HepG2 (cell line): ENCODE measurements at regions of chr11 and their contacts with region 1.

Region 1: DNA sequence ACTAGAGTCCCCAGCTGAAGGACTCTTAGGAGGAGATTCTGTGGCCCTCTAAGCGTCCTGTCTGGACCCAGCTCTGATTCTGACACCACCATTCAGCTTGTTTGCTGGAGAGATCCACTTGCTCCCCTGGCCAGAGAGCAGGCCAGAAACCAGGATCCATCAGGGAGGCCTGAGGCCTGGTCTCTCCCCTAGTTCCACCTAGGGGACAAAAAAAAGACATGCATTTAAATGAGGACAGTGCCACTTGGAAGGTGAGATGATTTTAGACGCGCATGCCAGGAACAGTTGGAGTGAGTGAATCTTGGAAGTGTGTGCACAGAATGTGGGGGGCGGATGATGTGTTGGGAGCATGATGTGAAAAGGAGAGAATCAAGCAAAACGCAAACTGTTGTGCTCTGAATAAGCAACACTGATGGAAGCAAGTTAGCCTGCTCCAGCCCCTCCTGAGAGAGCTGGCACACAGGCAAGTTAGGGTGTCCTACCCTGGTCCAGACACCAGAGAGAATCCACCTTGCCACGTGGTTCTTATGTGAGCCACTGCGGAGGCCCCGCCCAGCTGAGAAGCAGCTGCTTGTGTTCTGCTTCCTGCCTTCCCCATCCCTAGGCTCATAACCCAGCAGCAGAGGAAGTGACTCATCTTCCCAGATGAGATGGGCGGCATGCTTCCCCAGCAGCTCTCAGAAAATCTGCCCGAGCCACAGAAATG is 8.0 kb upstream of the SLCO2B1 start:
- DNase-seq: peak; percentile 72
- ATAC-seq: peak; percentile 52
- H3K4me3 ChIP-seq: no peak overlapping the region
- H3K27ac ChIP-seq: no peak overlapping the region
- H3K4me1 ChIP-seq: peaks cover 55% of the 10 kb centered on the region
- H3K27me3 ChIP-seq: peaks cover 1 to 6% of the 10 kb centered on the region in 2 experiments; a peak in 2 of 5 replicates
- CTCF ChIP-seq: no peak; the same call in 1 of the 2 replicates
- EP300 ChIP-seq: no peak
- POLR2A ChIP-seq: no peak
- RAD21 ChIP-seq: no peak

Region 2: DNA sequence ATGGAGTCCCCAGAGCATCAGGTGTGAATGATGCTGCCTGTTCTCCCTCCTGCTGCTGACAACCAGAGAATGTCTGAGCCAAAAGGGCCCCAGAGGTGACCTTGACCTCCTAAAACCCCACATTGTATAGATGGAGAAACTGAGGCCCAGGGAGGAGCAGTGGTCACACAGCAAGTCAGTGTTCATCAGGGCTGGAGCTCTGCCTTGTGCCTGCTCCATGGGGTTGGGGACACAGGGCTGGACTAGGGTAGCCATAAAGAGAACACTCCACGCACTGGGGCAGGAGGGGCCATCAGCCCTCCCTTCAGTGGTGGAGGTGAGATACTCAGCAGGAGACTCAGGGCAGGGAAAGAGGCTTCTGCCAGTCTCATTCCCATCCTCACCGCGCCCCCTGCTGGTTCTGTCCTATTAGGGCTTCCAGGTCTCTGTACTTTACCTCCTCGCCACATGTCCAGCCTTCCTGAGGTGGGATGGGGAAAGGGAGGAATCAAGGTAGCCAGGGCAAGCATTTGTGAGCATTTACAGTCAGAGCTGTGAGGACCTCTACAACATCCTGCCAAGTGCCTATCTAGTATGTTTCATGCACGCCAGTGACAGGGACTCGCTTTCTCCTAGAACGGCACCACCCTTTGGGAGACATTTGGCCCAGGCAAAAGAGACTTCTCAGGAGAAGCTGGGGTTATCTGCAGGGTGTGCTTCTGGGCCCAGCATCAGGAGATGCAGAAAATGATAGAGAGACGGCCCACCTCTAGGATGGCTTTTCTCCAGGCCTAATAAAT is 110.9 kb before region 1 on chr11:
- CTCF ChIA-PET with region 1: no interaction called
- POLR2A ChIA-PET with region 1: no interaction called
- in situ Hi-C with region 1: no loop called
- intact Hi-C with region 1: loop called (anchors 5 kb)
- DNase-seq: peak; percentile 65
- ATAC-seq: peak; percentile 95
- H3K4me3 ChIP-seq: no peak overlapping the region
- H3K27ac ChIP-seq: no peak overlapping the region
- H3K4me1 ChIP-seq: peaks cover 18% of the 10 kb centered on the region
- H3K27me3 ChIP-seq: peaks cover 0 to 2% of the 10 kb centered on the region in 2 experiments; a peak in 2 of 5 replicates
- CTCF ChIP-seq: peak; percentile 93
- EP300 ChIP-seq: no peak
- POLR2A ChIP-seq: no peak
- RAD21 ChIP-seq: peak; percentile 79

Region 3: DNA sequence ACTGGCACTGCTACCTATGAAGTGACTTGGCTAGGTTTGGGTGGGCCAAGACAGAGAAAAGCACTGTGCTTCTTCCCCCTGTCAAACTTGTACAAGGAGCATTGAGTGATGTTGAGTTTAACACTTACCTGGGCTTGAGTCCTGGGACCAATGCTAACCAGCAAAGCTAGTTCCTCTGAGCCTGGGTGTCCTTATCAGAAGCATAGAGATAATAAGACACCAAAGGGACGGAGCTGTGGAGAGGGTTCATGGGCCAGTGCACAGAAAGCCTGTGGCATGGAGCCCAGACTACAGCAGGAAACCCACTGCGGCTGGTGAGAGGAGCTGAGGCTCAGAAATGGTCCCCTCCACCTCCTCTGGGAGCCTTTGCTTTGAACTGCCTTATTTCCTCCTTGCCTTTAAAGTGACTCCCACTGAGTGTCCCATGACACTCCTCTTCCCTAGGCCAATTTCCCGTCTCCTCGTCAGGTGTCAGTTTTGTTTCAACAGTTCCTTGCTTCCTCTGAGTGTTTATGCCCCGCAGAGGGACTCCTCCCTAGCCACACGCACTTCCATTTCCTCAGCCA is 17.4 kb after region 1 on chr11:
- CTCF ChIA-PET with region 1: interaction called, 3 read pairs
- POLR2A ChIA-PET with region 1: interaction called, 28 read pairs
- in situ Hi-C with region 1: no loop called
- intact Hi-C with region 1: no loop called
- DNase-seq: no peak
- ATAC-seq: no peak
- H3K4me3 ChIP-seq: peak overlapping the region; percentile 9 to 61 (median 15); a peak in 4 of 6 replicates
- H3K27ac ChIP-seq: peak overlapping the region; percentile 89
- H3K4me1 ChIP-seq: peaks cover 100% of the 10 kb centered on the region
- H3K27me3 ChIP-seq: no peaks in the 10 kb centered on the region
- CTCF ChIP-seq: no peak
- EP300 ChIP-seq: no peak
- POLR2A ChIP-seq: no peak
- RAD21 ChIP-seq: no peak

Region 4: GRCh38 chr11:75241036-75241905 is 98.4 kb after region 1 on chr11:
- CTCF ChIA-PET with region 1: interaction called, 43 read pairs
- POLR2A ChIA-PET with region 1: interaction called, 6 read pairs
- in situ Hi-C with region 1: loop called (anchors 5 kb)
- intact Hi-C with region 1: loop called (anchors 2 kb)
- DNase-seq: peak; percentile 57
- ATAC-seq: peak; percentile 86
- H3K4me3 ChIP-seq: peak overlapping the region; percentile 46 to 74 (median 46); a peak in 5 of 6 replicates
- H3K27ac ChIP-seq: no peak overlapping the region
- H3K4me1 ChIP-seq: peaks cover 15% of the 10 kb centered on the region; the same call in 1 of the 2 replicates
- H3K27me3 ChIP-seq: peaks cover 15 to 63% of the 10 kb centered on the region in 2 experiments
- CTCF ChIP-seq: peak; percentile 76
- EP300 ChIP-seq: no peak
- POLR2A ChIP-seq: no peak
- RAD21 ChIP-seq: peak; percentile 97

Region 5: DNA sequence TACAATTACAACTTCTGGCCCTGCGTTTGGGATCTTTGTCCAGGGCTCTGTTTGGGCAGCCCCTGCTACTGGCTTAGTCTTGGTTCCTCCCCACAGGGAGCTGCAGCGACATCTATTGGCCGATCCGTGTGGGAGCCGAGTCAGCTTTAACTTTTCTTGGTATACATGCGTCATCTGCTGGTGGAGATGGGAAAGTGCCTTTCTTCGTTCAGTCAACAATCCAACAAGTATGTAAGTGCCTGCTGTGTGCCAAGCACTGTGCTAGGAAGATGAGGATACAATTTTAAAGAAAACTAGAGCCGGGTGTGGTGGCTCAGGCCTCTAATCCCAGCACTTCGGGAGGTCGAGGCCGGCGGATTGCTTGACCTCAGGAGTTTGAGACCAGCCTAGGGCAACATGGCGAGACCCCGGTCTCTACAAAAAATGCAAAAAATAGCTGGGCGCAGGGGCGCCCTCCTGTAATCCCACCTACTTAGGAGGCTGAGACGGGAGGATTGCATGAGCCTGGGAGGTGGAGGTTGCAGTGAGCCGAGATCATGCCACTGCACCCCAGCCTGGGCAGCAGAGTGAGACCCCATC is 105.9 kb after region 1 on chr11:
- CTCF ChIA-PET with region 1: interaction called, 72 read pairs
- POLR2A ChIA-PET with region 1: interaction called, 5 read pairs
- in situ Hi-C with region 1: loop called (anchors 5 kb)
- intact Hi-C with region 1: loop called (anchors 1 kb)
- DNase-seq: peak; percentile 81
- ATAC-seq: peak; percentile 85
- H3K4me3 ChIP-seq: no peak overlapping the region; a peak in 1 of 6 replicates
- H3K27ac ChIP-seq: no peak overlapping the region
- H3K4me1 ChIP-seq: peaks cover 5% of the 10 kb centered on the region; the same call in 1 of the 2 replicates
- H3K27me3 ChIP-seq: peaks cover 2 to 26% of the 10 kb centered on the region in 2 experiments; a peak in 4 of 5 replicates
- CTCF ChIP-seq: peak; percentile 99
- EP300 ChIP-seq: no peak
- POLR2A ChIP-seq: no peak
- RAD21 ChIP-seq: peak; percentile 95